Right ventricle myocardium inferior (tissue), 1 donor: ENCODE measurements at regions of chr1 and their contacts with region 1.

Region 1: GRCh38 chr1:43073490-43074230 is 98.4 kb downstream of the EBNA1BP2 start:
- DNase-seq: peak; percentile 87
- ATAC-seq: peak; percentile 90

Region 2: GRCh38 chr1:42576935-42577334 is 496.7 kb before region 1 on chr1:
- intact Hi-C with region 1: loop called (anchors 5 kb)
- DNase-seq: no peak
- ATAC-seq: no peak

Region 3: DNA sequence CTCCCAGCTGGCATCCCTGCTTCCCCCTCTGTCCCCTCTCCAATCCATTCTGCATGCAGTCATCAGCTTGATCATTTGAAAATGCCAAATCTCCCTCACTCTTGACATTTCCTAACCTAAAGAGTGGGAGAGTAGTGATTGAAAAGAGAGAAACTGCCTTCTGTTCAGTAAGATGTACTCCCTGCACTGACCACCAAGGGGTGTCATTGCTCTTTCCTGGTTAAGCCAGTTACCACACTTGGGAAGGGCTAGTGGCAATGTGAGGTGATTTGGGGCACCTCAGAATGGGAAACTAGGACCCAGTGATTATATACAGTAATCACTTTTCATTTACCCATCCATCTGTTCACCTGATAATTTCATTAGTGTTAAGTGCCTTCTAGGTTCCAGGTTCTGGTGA is 295.8 kb before region 1 on chr1:
- intact Hi-C with region 1: loop called (anchors 2 kb)
- DNase-seq: no peak
- ATAC-seq: no peak

Region 4: GRCh38 chr1:42886800-42887199 is 186.9 kb before region 1 on chr1:
- intact Hi-C with region 1: no loop called
- DNase-seq: no peak
- ATAC-seq: no peak

Region 5: DNA sequence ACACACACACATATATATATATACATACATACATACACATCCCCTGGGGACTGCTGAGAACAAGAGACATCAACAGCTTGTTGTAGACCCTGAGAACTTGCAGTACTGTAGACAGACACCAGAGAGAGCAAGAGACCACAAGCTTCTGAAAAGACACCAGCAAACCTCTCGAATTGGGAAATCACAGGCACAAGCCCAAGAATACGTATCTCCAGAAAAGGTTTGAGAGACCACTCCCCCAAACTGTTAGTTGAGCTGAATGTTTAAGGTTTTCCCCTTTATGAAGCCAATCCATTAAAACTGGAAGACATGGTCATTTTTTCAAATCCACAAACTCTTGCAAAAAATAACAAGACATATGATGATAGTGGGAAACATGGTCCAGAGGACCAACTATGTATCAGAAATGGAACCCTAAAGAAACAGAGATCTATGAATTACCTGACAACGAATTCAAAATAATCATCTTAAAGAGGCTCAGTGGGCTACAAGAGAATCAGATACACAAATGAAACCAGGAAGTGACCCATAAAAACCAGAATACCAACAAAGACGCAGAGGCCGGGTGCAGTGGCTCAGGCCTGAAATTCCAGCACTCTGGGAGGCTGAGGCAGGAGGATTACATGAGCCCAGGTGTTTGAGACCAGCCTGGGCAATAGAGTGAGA is 160.1 kb before region 1 on chr1:
- intact Hi-C with region 1: loop called (anchors 1 kb)
- DNase-seq: no peak
- ATAC-seq: peak; percentile 68